GM12878 (cell line): ENCODE measurements at regions of chr14 and their contacts with region 1.

Region 1: DNA sequence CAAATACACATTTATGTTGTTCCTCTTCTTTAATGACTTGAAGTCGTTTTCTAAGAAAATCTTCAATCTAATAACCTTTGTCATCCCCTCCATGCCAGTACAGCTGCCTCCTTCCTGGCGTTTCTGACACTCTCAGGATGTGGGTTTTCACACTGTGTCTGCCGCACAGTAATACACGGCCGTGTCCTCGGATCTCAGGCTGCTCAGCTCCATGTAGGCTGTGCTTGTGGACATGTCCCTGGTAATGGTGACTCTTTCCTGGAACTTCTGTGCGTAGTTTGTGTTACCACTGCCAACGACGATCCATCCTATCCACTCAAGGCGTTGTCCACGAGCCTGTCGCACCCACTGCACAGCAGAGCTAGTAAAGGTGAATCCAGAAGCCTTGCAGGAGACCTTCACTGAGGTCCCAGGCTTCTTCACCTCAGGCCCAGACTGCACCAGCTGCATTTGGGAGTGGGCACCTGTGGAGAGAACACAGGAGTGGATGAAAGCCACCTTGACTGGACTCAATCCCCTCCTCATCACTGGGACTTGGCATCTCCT is 1095.9 kb downstream of the TMEM121 start:
- DNase-seq: no peak
- ATAC-seq: no peak
- H3K4me3 ChIP-seq: no peak overlapping the region
- H3K27ac ChIP-seq: no peak overlapping the region
- H3K4me1 ChIP-seq: no peaks in the 10 kb centered on the region
- H3K27me3 ChIP-seq: peaks cover 3 to 6% of the 10 kb centered on the region in 2 experiments
- CTCF ChIP-seq: no peak
- EP300 ChIP-seq: no peak
- POLR2A ChIP-seq: no peak
- RAD21 ChIP-seq: no peak

Region 2: GRCh38 chr14:106564058-106564656 is 58.1 kb before region 1 on chr14:
- CTCF ChIA-PET with region 1: interaction called, 13 read pairs
- POLR2A ChIA-PET with region 1: no interaction called
- RAD21 ChIA-PET with region 1: interaction called, 3 read pairs
- SMC1A ChIA-PET with region 1: no interaction called
- in situ Hi-C with region 1: no loop called
- intact Hi-C with region 1: no loop called
- DNase-seq: no peak
- ATAC-seq: peak; percentile 96
- H3K4me3 ChIP-seq: no peak overlapping the region
- H3K27ac ChIP-seq: no peak overlapping the region
- H3K4me1 ChIP-seq: no peaks in the 10 kb centered on the region
- H3K27me3 ChIP-seq: peaks cover 0 to 2% of the 10 kb centered on the region in 2 experiments; a peak in 2 of 4 replicates
- CTCF ChIP-seq: peak; percentile 85 to 96 (median 96)
- EP300 ChIP-seq: no peak
- POLR2A ChIP-seq: no peak
- RAD21 ChIP-seq: peak; percentile 69

Region 3: GRCh38 chr14:106586098-106586704 is 36.1 kb before region 1 on chr14:
- CTCF ChIA-PET with region 1: interaction called, 11 read pairs
- POLR2A ChIA-PET with region 1: interaction called, 4 read pairs
- RAD21 ChIA-PET with region 1: no interaction called
- SMC1A ChIA-PET with region 1: no interaction called
- in situ Hi-C with region 1: no loop called
- intact Hi-C with region 1: no loop called
- DNase-seq: no peak
- ATAC-seq: peak; percentile 100
- H3K4me3 ChIP-seq: no peak overlapping the region
- H3K27ac ChIP-seq: no peak overlapping the region
- H3K4me1 ChIP-seq: peaks cover 6% of the 10 kb centered on the region
- H3K27me3 ChIP-seq: no peaks in the 10 kb centered on the region
- CTCF ChIP-seq: peak; percentile 72 to 94 (median 90)
- EP300 ChIP-seq: no peak
- POLR2A ChIP-seq: no peak
- RAD21 ChIP-seq: peak; percentile 63; the same call in 1 of the 2 replicates

Region 4: GRCh38 chr14:106599209-106599608 is 23.1 kb before region 1 on chr14:
- CTCF ChIA-PET with region 1: interaction called, 27 read pairs
- POLR2A ChIA-PET with region 1: no interaction called
- RAD21 ChIA-PET with region 1: interaction called, 3 read pairs
- SMC1A ChIA-PET with region 1: interaction called, 4 read pairs
- in situ Hi-C with region 1: no loop called
- intact Hi-C with region 1: no loop called
- DNase-seq: no peak
- ATAC-seq: no peak
- H3K4me3 ChIP-seq: no peak overlapping the region
- H3K27ac ChIP-seq: no peak overlapping the region
- H3K4me1 ChIP-seq: no peaks in the 10 kb centered on the region
- H3K27me3 ChIP-seq: 0 out of 4 replicates have a peak, but pooled peaks cover 0 to 2% of the 10 kb centered on the region in 2 experiments
- CTCF ChIP-seq: no peak
- EP300 ChIP-seq: no peak
- POLR2A ChIP-seq: no peak
- RAD21 ChIP-seq: no peak

Region 5: GRCh38 chr14:106605548-106606448 is 16.5 kb before region 1 on chr14:
- CTCF ChIA-PET with region 1: interaction called, 27 read pairs
- POLR2A ChIA-PET with region 1: no interaction called
- RAD21 ChIA-PET with region 1: interaction called, 3 read pairs
- SMC1A ChIA-PET with region 1: interaction called, 7 read pairs
- in situ Hi-C with region 1: no loop called
- intact Hi-C with region 1: no loop called
- DNase-seq: peak; percentile 21
- ATAC-seq: peak; percentile 100
- H3K4me3 ChIP-seq: no peak overlapping the region
- H3K27ac ChIP-seq: no peak overlapping the region
- H3K4me1 ChIP-seq: no peaks in the 10 kb centered on the region
- H3K27me3 ChIP-seq: peaks cover 0 to 3% of the 10 kb centered on the region in 2 experiments; a peak in 1 of 4 replicates
- CTCF ChIP-seq: peak; percentile 69 to 91 (median 85)
- EP300 ChIP-seq: no peak
- POLR2A ChIP-seq: no peak
- RAD21 ChIP-seq: peak; percentile 55

Region 6: GRCh38 chr14:106657460-106657859 is 35.2 kb after region 1 on chr14:
- CTCF ChIA-PET with region 1: interaction called, 29 read pairs
- POLR2A ChIA-PET with region 1: no interaction called
- RAD21 ChIA-PET with region 1: interaction called, 8 read pairs
- SMC1A ChIA-PET with region 1: interaction called, 5 read pairs
- in situ Hi-C with region 1: no loop called
- intact Hi-C with region 1: no loop called
- DNase-seq: no peak
- ATAC-seq: peak; percentile 70
- H3K4me3 ChIP-seq: no peak overlapping the region
- H3K27ac ChIP-seq: no peak overlapping the region
- H3K4me1 ChIP-seq: peaks cover 7% of the 10 kb centered on the region
- H3K27me3 ChIP-seq: no peaks in the 10 kb centered on the region
- CTCF ChIP-seq: peak; percentile 68 to 85 (median 81)
- EP300 ChIP-seq: no peak
- POLR2A ChIP-seq: no peak
- RAD21 ChIP-seq: peak; percentile 60

Region 7: DNA sequence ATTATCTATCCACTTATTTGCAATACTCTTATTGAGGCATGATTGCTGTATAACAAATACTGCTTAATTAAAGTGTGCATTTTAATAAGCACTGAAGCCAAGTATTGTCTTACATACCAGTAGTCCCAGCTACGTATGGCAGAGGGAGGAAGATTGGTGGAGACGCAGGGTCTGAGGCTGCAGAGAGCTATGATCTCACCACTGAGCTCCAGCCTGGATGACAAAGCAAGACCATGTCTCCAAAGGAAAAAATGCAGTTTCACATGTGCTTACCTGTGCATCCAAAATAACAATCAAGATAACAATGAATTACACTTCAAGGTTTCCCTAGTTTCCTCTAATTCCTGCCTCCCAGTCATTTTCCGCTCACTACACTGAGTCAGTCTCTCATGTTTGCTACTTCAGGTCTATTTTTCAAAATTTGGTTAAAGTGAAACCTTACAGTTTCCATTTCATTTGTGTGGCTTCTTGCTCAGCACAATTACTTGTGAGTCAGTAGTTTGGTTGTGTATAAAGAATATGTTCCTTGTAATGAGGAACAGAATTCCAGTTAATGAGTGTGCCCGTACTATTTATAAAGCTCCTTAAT is 154.2 kb after region 1 on chr14:
- CTCF ChIA-PET with region 1: no interaction called
- POLR2A ChIA-PET with region 1: no interaction called
- RAD21 ChIA-PET with region 1: no interaction called
- SMC1A ChIA-PET with region 1: no interaction called
- in situ Hi-C with region 1: no loop called
- intact Hi-C with region 1: no loop called
- DNase-seq: no peak
- ATAC-seq: 0 out of 3 replicates have a peak, but pooled peaks have one; percentile 16
- H3K4me3 ChIP-seq: no peak overlapping the region
- H3K27ac ChIP-seq: no peak overlapping the region
- H3K4me1 ChIP-seq: peaks cover 8% of the 10 kb centered on the region
- H3K27me3 ChIP-seq: no peaks in the 10 kb centered on the region
- CTCF ChIP-seq: no peak
- EP300 ChIP-seq: no peak
- POLR2A ChIP-seq: no peak
- RAD21 ChIP-seq: no peak